Motor neuron (in vitro differentiated cells): ENCODE measurements at regions of chr5 and their contacts with region 1.

Region 1: GRCh38 chr5:81751009-81751835 is at the start of gene SSBP2:
- ATAC-seq: peak; percentile 76 to 92 (median 88)
- H3K4me3 ChIP-seq: peak within 1 kb of the TSS; percentile 55 to 92 (median 68)
- H3K27ac ChIP-seq: peak within 1 kb of the TSS; percentile 79 to 89
- H3K4me1 ChIP-seq: peaks cover 19 to 39% of the 10 kb centered on the region in 2 donors
- total RNA-seq, gene SSBP2: 18.3 to 129 (median 61.7) TPM

Region 2: DNA sequence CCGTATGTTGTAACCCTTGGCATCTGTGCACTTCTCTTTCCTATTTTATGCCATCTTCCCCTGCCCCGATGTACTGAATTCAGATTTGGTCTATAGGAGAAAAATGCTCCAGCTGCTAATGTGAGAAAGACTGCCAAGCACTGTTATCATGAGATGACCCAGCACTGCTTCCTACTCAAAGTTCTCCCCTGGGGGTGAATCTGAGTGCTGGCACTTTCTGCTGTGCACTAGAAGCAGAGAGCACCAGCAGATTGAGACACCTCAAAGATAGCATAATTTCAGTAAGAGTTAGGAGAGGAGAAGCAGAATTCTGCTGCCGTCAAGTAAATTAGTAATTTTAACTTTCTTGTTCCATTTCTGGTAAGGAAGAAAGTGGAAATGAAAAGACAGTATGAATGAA is 264.5 kb before region 1 on chr5:
- in situ Hi-C with region 1: loop called in 1 of 9 experiments (anchors 25 kb)
- ATAC-seq: no peak
- H3K4me3 ChIP-seq: no peak overlapping the region
- H3K27ac ChIP-seq: no peak overlapping the region
- H3K4me1 ChIP-seq: no peaks in the 10 kb centered on the region

Region 3: GRCh38 chr5:81525690-81526089 is 225.5 kb before region 1 on chr5:
- in situ Hi-C with region 1: loop called in 3 of 9 experiments (anchors 25 kb)
- ATAC-seq: no peak
- H3K4me3 ChIP-seq: no peak overlapping the region
- H3K27ac ChIP-seq: no peak overlapping the region
- H3K4me1 ChIP-seq: no peaks in the 10 kb centered on the region

Region 4: GRCh38 chr5:81851481-81852178 is 100.4 kb after region 1 on chr5:
- in situ Hi-C with region 1: loop called in 4 of 9 experiments (anchors 10 to 25 kb)
- ATAC-seq: peak; percentile 77 to 95 (median 92)
- H3K4me3 ChIP-seq: peak overlapping the region; percentile 17 to 35 (median 26)
- H3K27ac ChIP-seq: peak overlapping the region; percentile 48 to 85
- H3K4me1 ChIP-seq: peaks cover 60 to 81% of the 10 kb centered on the region in 2 donors

Region 5: GRCh38 chr5:82091617-82092016 is 340.4 kb after region 1 on chr5:
- in situ Hi-C with region 1: no loop called
- ATAC-seq: no peak
- H3K4me3 ChIP-seq: no peak overlapping the region
- H3K27ac ChIP-seq: no peak overlapping the region
- H3K4me1 ChIP-seq: no peaks in the 10 kb centered on the region

Region 6: GRCh38 chr5:82165740-82166530 is 414.7 kb after region 1 on chr5:
- in situ Hi-C with region 1: loop called in 1 of 9 experiments (anchors 25 kb)
- ATAC-seq: peak; percentile 95 to 100 (median 99)
- H3K4me3 ChIP-seq: no peak overlapping the region
- H3K27ac ChIP-seq: peak overlapping the region in 1 of 2 donors; percentile 8
- H3K4me1 ChIP-seq: peaks cover 5 to 12% of the 10 kb centered on the region in 2 donors